ENCODE measurements at regions of chr17 and their contacts with region 1.

Region 1: DNA sequence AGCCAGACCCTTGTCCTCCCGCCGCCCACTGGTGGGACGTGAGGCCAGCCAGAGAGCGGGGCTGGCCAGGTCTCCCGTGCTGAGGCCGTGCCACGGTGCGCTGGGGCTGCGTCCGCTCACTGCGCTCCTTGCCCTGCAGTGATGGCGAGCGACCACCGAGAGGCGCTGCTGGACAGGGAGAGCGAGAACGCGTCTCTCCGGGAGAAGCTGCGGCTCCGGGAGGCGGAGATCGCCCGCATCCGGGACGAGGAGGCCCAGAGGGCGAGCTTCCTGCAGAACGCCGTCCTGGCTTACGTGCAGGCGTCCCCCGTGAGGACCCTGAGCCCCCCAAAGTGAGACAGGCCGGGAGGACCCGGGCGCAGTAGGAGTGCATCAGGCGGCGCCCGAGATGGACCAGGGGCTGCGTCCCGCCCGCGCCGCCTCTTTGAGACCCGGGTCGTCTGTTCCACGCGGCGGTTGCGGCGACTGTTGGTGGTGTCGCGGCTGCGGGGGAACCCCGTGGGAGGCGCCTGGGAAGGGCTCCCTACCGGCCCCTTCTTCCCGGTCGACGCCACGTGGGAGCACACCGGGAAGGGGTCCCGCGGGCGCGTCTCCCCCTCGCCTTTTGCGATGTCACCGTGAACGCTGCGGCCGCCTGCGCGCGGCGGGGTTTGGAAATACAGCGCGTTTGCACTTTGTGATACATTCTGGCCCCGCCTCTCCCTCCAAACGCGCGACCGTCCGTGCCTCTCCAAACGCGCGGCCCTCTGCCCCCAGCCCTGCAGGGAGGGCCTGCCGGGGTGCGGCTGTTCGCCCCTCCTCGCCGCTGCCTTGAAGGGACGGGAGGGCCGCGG is 792 bp upstream of the RAC3 start:
- DNase-seq: peak; percentile 85
- ATAC-seq: peak; percentile 87
- H3K4me3 Mint-ChIP-seq: peak overlapping the region; percentile 73
- H3K27ac Mint-ChIP-seq: no peak overlapping the region
- H3K4me1 Mint-ChIP-seq: peaks cover 7% of the 10 kb centered on the region
- H3K27me3 Mint-ChIP-seq: no peaks in the 10 kb centered on the region
- CTCF ChIP-seq: peak; percentile 100

Region 2: GRCh38 chr17:81878294-81878693 is 152.4 kb before region 1 on chr17:
- CTCF ChIA-PET with region 1: no interaction called
- POLR2A ChIA-PET with region 1: no interaction called
- intact Hi-C with region 1: no loop called
- DNase-seq: no peak
- ATAC-seq: no peak
- H3K4me3 Mint-ChIP-seq: no peak overlapping the region
- H3K27ac Mint-ChIP-seq: no peak overlapping the region
- H3K4me1 Mint-ChIP-seq: peaks cover 16% of the 10 kb centered on the region
- H3K27me3 Mint-ChIP-seq: no peaks in the 10 kb centered on the region
- CTCF ChIP-seq: no peak

Region 3: DNA sequence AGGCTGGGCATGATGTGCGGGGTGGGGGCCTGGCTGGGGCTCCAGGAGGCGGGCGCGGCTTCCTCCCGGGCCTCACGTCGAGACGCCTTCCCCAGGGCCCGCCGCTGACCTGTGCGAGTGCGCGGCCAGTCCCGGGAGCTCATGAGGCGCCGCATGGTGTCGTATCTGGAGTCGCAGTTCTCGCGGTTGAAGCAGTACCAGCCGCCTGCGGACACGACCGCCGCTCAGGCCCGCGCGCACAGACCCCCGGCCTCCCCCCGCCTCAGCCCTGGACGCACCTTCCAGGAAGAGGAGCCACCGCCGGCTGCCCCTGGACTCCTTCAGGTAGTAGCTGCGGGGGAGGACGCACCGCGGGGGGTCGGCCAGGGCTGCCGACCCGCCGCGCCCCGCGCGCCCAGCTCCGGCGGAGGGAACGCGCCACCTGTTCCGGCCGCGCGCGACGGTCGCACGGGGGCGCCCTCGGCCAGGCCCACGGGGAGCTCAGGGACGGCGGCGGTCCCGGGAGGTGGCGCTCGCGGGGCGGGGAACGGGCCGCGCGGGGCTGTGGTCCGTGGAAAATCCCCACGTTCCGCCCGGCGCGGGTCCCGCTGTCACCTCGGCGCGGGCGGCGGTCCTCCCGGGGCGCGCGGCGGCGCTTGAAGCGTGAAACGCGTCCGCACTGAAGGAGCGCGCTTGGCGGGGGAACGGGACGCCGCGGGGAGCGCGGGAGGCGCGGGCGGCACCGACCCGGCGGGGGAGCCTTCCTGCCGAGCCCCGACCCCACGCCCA is 71.1 kb before region 1 on chr17:
- CTCF ChIA-PET with region 1: interaction called, 18 read pairs
- POLR2A ChIA-PET with region 1: no interaction called
- intact Hi-C with region 1: no loop called
- DNase-seq: peak; percentile 76
- ATAC-seq: peak; percentile 86
- H3K4me3 Mint-ChIP-seq: peak overlapping the region; percentile 42
- H3K27ac Mint-ChIP-seq: no peak overlapping the region
- H3K4me1 Mint-ChIP-seq: peaks cover 4% of the 10 kb centered on the region
- H3K27me3 Mint-ChIP-seq: peaks cover 21% of the 10 kb centered on the region
- CTCF ChIP-seq: peak; percentile 91

Region 4: GRCh38 chr17:82051776-82052637 is 21.3 kb after region 1 on chr17 and contains the starts of genes GPS1 and RFNG:
- CTCF ChIA-PET with region 1: interaction called, 11 read pairs
- POLR2A ChIA-PET with region 1: interaction called, 5 read pairs
- intact Hi-C with region 1: no loop called
- DNase-seq: peak; percentile 89
- ATAC-seq: peak; percentile 92
- H3K4me3 Mint-ChIP-seq: peak within 1 kb of the TSS; percentile 82
- H3K27ac Mint-ChIP-seq: peak within 1 kb of the TSS; percentile 75
- H3K4me1 Mint-ChIP-seq: peaks cover 21% of the 10 kb centered on the region
- H3K27me3 Mint-ChIP-seq: no peaks in the 10 kb centered on the region
- CTCF ChIP-seq: no peak
- total RNA-seq, gene GPS1: 82.7 to 88.6 TPM
- total RNA-seq, gene RFNG: 14.2 to 15.3 TPM

Region 5: GRCh38 chr17:82098072-82098821 is 67.6 kb after region 1 on chr17 and contains the start of gene FASN:
- CTCF ChIA-PET with region 1: interaction called, 10 read pairs
- POLR2A ChIA-PET with region 1: interaction called, 3 read pairs
- intact Hi-C with region 1: no loop called
- DNase-seq: peak; percentile 95
- ATAC-seq: peak; percentile 82
- H3K4me3 Mint-ChIP-seq: peak within 1 kb of the TSS; percentile 80
- H3K27ac Mint-ChIP-seq: peak within 1 kb of the TSS; percentile 20
- H3K4me1 Mint-ChIP-seq: peaks cover 16% of the 10 kb centered on the region
- H3K27me3 Mint-ChIP-seq: no peaks in the 10 kb centered on the region
- CTCF ChIP-seq: peak; percentile 26
- total RNA-seq, gene FASN: 250 to 260 TPM

Region 6: GRCh38 chr17:82153745-82154375 is 123.2 kb after region 1 on chr17:
- CTCF ChIA-PET with region 1: interaction called, 26 read pairs
- POLR2A ChIA-PET with region 1: no interaction called
- intact Hi-C with region 1: loop called (anchors 10 kb)
- DNase-seq: peak; percentile 89
- ATAC-seq: peak; percentile 100
- H3K4me3 Mint-ChIP-seq: no peak overlapping the region
- H3K27ac Mint-ChIP-seq: no peak overlapping the region
- H3K4me1 Mint-ChIP-seq: peaks cover 4% of the 10 kb centered on the region
- H3K27me3 Mint-ChIP-seq: no peaks in the 10 kb centered on the region
- CTCF ChIP-seq: peak; percentile 96

Measured in activated CD8-positive, alpha-beta T cell treated with anti-CD3 and anti-CD28 coated beads for 36 hours (primary cell).